CD8-positive, alpha-beta T cell (primary cell): ENCODE measurements at regions of chr11 and their contacts with region 1.

Region 1: DNA sequence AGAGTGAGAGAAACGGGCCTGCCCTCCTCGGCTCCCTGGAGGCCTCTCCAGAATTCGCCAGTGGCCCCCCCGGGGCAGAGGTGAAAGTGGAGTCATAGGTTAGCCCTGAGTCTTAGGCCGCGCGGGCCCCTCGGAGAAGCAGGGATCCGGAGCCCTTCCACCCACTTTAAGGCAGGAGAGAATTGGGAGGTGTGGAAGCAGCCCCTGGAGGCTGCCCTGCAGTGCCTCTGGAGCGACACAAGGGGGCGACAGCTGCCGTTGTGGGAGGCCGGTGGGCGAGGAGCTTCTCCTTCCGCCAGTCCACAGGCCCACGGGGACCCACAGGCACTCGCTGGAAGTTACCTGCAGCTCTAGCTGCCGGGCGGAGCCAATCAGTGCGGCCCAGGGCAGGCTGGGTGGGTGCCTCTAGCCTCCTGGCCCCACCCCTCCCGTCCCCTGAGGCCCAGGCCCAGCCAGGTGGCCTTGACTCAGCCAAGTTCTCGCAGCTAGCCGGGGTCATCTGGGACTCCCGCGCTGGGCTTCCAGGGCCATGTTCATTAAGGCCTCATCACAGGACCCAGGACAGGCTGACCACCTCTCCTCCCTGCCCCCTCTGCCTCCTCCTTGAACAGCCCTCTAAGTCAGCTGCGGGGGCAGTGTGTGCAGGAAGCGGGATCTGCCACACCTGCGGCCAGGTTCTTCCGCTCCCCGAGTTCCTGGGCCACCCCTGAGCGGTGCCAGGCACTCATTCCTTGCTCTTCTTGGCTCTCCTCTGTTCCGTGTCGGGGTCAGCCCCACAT is 5.0 kb downstream of the DGKZ start:
- DNase-seq: peak; percentile 62 to 93 (median 85)
- ATAC-seq: peak; percentile 65
- H3K4me3 ChIP-seq: peak overlapping the region; percentile 41 to 66
- H3K4me3 Mint-ChIP-seq: peak overlapping the region; percentile 84
- H3K27ac ChIP-seq: peak overlapping the region; percentile 27 to 64
- H3K27ac Mint-ChIP-seq: peak overlapping the region; percentile 92
- H3K4me1 ChIP-seq: peaks cover 79% of the 10 kb centered on the region
- H3K4me1 Mint-ChIP-seq: peaks cover 77% of the 10 kb centered on the region
- H3K27me3 ChIP-seq: no peaks in the 10 kb centered on the region
- H3K27me3 Mint-ChIP-seq: no peaks in the 10 kb centered on the region
- CTCF ChIP-seq: peak; percentile 93

Region 2: DNA sequence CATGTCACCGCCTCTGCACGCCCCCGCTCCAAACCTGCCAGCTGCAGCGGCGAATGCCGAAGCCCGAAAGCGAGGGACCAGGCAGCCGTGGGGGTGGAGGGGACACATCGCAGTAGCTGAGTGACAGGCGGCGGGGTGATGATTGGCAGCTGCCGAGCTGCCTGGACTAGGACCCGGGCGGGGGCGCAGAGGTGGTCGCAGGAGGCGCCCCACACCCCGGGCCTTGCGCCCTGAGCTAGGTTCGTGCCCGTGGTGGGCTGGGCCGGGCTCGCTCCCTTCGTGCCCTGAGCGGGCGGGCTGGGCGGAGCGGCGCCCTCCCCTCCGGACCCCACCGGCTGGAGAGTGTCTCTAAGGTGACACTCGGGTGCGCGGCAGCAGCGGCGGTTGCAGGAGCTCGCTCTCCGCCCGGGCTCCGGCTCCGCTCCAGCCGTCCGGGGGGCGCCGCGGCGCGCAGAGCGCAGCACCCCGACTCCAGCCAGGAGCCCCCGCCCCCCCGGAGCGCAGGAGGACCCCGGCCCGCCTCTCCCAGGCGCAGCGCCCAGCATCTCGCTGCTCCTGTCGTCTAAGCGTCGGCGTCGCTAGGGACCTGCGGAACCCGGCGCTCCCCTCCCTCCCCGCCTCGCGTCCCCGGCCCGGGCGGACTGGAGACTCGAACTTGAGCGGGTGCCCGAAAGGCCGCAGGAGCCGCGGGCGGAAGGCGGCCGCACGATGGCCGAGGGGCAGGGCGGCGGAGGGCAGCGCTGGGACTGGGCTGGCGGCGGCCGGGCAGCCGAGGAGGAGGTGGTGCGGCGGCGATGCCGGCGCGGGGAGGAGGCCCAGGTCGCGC is 19.5 kb before region 1 on chr11:
- CTCF ChIA-PET with region 1: interaction called, 16 read pairs
- POLR2A ChIA-PET with region 1: interaction called, 47 read pairs
- intact Hi-C with region 1: loop called (anchors 1 kb)
- DNase-seq: peak in 7 of 9 experiments; percentile 36 to 71 (median 58)
- ATAC-seq: peak; percentile 32
- H3K4me3 ChIP-seq: peak overlapping the region; percentile 43 to 54
- H3K4me3 Mint-ChIP-seq: peak overlapping the region; percentile 86
- H3K27ac ChIP-seq: peak overlapping the region in 1 of 2 experiments; percentile 6
- H3K27ac Mint-ChIP-seq: peak overlapping the region; percentile 95
- H3K4me1 ChIP-seq: peaks cover 62% of the 10 kb centered on the region
- H3K4me1 Mint-ChIP-seq: peaks cover 61% of the 10 kb centered on the region
- H3K27me3 ChIP-seq: peaks cover 0 to 12% of the 10 kb centered on the region in 2 experiments
- H3K27me3 Mint-ChIP-seq: no peaks in the 10 kb centered on the region
- CTCF ChIP-seq: no peak

Region 3: GRCh38 chr11:46367244-46367915 is 15.1 kb after region 1 on chr11:
- CTCF ChIA-PET with region 1: interaction called, 412 read pairs
- POLR2A ChIA-PET with region 1: interaction called, 32 read pairs
- intact Hi-C with region 1: loop called (anchors 1 kb)
- DNase-seq: peak; percentile 54 to 90 (median 81)
- ATAC-seq: peak; percentile 96
- H3K4me3 ChIP-seq: no peak overlapping the region
- H3K4me3 Mint-ChIP-seq: no peak overlapping the region
- H3K27ac ChIP-seq: no peak overlapping the region
- H3K27ac Mint-ChIP-seq: no peak overlapping the region
- H3K4me1 ChIP-seq: peaks cover 50% of the 10 kb centered on the region
- H3K4me1 Mint-ChIP-seq: peaks cover 43% of the 10 kb centered on the region
- H3K27me3 ChIP-seq: no peaks in the 10 kb centered on the region
- H3K27me3 Mint-ChIP-seq: no peaks in the 10 kb centered on the region
- CTCF ChIP-seq: peak; percentile 72

Region 4: DNA sequence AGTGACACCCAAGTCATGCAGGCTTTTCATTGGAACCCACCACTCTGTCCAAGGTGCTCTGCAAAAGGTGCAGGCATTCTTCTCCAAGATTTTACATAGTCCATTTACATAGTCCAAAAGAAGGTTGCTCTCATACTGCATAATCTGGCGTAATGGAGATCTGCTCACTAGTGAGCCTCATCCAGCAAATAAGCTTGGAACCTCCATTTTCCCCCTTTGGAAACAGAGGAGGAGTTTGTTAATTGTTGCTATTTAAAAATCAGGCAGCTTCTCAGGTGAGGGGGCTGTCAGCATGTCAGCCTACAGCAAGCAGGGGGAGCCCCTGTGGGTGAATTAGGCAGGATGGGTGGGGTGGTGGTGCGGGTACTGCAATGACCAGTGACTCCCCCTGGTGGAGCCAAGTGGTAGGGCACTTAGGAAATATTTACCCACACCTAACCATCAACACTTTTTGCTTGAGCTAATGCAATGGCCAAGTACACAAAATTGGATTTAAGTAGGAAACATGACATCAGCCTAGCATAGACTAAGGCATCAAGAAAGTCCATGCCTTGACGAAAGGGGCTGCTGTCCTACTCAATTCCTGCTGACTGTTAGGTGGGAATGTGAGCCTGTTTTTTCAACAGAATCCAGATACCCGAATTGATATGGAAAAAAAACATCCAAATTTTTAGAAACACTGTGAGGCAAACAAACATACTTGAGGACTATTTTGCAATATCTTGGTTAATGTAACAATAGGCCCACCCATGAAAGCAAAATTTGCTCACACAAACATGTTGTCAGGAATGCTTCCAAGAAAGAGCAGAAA is 177.0 kb after region 1 on chr11:
- CTCF ChIA-PET with region 1: interaction called, 4 read pairs
- POLR2A ChIA-PET with region 1: no interaction called
- intact Hi-C with region 1: loop called in 1 of 2 experiments (anchors 1 kb)
- DNase-seq: peak; percentile 48 to 86 (median 79)
- ATAC-seq: peak; percentile 100
- H3K4me3 ChIP-seq: no peak overlapping the region
- H3K4me3 Mint-ChIP-seq: no peak overlapping the region
- H3K27ac ChIP-seq: no peak overlapping the region
- H3K27ac Mint-ChIP-seq: no peak overlapping the region
- H3K4me1 ChIP-seq: peaks cover 6% of the 10 kb centered on the region
- H3K4me1 Mint-ChIP-seq: peaks cover 42% of the 10 kb centered on the region
- H3K27me3 ChIP-seq: no peaks in the 10 kb centered on the region
- H3K27me3 Mint-ChIP-seq: no peaks in the 10 kb centered on the region
- CTCF ChIP-seq: peak; percentile 93